ENCODE measurements at regions of chr5 and their contacts with region 1.

Region 1: DNA sequence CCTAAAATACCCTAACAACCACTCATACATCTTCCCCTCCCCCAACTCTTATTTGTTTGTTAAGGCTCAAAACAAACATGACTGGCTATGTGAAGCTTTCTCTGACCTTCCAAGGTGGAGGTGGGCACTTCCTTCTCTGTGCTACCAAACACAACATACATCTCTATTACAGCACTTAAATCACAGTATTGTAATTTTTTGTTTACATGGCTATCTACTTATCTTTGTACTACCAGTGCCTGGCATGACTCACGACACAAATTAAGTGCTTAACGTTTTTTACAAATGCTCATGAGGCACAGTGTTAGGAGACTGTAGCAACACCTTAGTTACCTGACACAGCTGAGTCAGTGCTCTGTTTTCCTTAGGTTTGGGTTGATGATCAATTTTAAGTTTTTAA is 18.6 kb downstream of the HOMER1 start:
- DNase-seq: no peak
- ATAC-seq: peak; percentile 60
- H3K4me3 ChIP-seq: no peak overlapping the region
- H3K27ac ChIP-seq: no peak overlapping the region
- H3K4me1 ChIP-seq: peaks cover 11% of the 10 kb centered on the region; the same call in 1 of the 2 replicates
- H3K27me3 ChIP-seq: no peaks in the 10 kb centered on the region
- CTCF ChIP-seq: no peak

Region 2: DNA sequence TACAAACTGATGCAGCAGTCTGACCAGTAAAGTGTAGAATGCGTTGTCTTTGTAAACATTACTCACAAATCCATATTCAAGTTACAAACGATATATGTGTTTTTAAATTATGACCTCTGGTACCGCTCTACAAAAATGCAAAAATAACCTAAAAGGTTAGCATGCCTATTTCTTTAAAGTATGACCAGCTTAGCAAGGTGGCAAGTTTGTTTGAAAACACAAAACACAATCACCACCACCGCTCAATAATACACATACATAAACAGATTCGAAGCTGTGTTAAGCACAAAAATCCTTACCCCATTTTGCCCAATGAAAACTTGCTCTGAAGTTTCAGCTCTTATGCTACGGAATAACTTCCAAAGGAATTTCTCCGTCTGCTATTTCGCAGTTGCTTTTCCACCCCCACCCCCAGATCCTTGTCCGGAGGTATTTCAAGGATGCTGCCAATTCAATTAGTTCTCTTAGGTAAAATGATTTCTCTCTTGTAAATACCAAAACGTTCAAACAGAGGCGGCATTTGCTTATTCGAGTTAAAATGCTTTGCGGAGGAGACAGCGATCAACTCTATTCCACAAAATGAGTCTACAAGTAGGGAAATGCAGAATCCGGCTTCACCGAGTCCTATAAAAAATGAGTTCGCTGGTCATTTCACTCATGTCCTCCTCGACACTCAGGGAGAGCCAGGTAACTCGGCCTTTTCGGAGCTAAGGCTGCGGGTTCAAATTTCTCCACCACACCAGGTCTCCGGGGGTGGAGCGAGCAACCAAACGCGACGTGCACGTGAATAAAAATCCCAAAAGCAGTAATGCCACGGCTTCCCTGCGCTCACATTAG is 17.4 kb after region 1 on chr5:
- CTCF ChIA-PET with region 1: no interaction called
- POLR2A ChIA-PET with region 1: interaction called, 10 read pairs
- in situ Hi-C with region 1: no loop called
- intact Hi-C with region 1: no loop called
- DNase-seq: no peak
- ATAC-seq: no peak
- H3K4me3 ChIP-seq: peak overlapping the region; percentile 83 to 85
- H3K27ac ChIP-seq: peak overlapping the region; percentile 72
- H3K4me1 ChIP-seq: peaks cover 31% of the 10 kb centered on the region
- H3K27me3 ChIP-seq: no peaks in the 10 kb centered on the region
- CTCF ChIP-seq: no peak

Region 3: DNA sequence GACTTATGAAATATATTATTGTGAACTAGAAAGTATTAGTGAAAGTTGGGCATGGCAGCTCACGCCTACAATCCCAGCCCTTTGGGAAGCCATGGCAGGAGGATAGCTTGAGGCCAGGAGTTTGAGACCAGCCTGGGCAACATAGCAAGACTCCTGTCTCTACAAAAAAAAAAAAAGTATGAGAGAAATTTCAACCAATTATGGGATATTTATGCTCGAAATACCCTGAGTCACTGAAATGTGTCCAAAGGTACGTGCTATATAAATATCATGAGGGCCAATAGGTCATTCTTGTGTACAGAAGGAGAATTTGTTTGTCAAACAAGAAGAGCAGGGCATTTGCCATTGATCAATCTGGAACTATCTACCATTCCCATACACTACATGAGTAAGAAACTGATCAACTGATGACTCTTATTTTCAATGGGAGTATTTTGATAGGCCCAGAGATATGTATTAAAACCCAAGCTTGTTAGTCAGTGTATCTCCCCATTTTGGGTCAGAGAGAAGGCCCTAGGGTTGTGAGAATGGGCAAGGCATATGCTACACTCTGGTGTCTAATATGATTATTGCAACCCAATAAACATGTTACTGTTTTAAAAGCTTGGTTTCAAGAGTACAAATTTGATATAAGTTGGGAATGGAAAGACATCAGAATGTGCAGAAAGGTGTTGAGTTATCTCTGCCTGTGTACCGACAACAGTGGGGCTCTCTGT is 40.3 kb after region 1 on chr5:
- CTCF ChIA-PET with region 1: no interaction called
- POLR2A ChIA-PET with region 1: interaction called, 12 read pairs
- in situ Hi-C with region 1: no loop called
- intact Hi-C with region 1: no loop called
- DNase-seq: no peak
- ATAC-seq: no peak
- H3K4me3 ChIP-seq: no peak overlapping the region
- H3K27ac ChIP-seq: no peak overlapping the region
- H3K4me1 ChIP-seq: no peaks in the 10 kb centered on the region
- H3K27me3 ChIP-seq: no peaks in the 10 kb centered on the region
- CTCF ChIP-seq: peak; percentile 19; the same call in 1 of the 2 replicates